Activated CD4-positive, alpha-beta T cell treated with anti-CD3 and anti-CD28 coated beads for 36 hours (primary cell): ENCODE measurements at regions of chr4 and their contacts with region 1.

Region 1: GRCh38 chr4:89906777-89907521 is 12.3 kb downstream of the MMRN1 start:
- DNase-seq: no peak
- ATAC-seq: peak; percentile 93
- H3K4me3 Mint-ChIP-seq: no peak overlapping the region
- H3K27ac Mint-ChIP-seq: no peak overlapping the region
- H3K4me1 Mint-ChIP-seq: peaks cover 2% of the 10 kb centered on the region
- H3K27me3 Mint-ChIP-seq: no peaks in the 10 kb centered on the region

Region 2: GRCh38 chr4:89586864-89587263 is 320.1 kb before region 1 on chr4:
- CTCF ChIA-PET with region 1: no interaction called
- POLR2A ChIA-PET with region 1: no interaction called
- intact Hi-C with region 1: loop called (anchors 5 to 10 kb)
- DNase-seq: no peak
- ATAC-seq: no peak
- H3K4me3 Mint-ChIP-seq: no peak overlapping the region
- H3K27ac Mint-ChIP-seq: no peak overlapping the region
- H3K4me1 Mint-ChIP-seq: no peaks in the 10 kb centered on the region
- H3K27me3 Mint-ChIP-seq: peaks cover 2% of the 10 kb centered on the region

Region 3: GRCh38 chr4:89640620-89641366 is 266.2 kb before region 1 on chr4:
- CTCF ChIA-PET with region 1: interaction called, 3 read pairs
- POLR2A ChIA-PET with region 1: no interaction called
- intact Hi-C with region 1: loop called (anchors 5 kb)
- DNase-seq: peak; percentile 37
- ATAC-seq: no peak
- H3K4me3 Mint-ChIP-seq: no peak overlapping the region
- H3K27ac Mint-ChIP-seq: no peak overlapping the region
- H3K4me1 Mint-ChIP-seq: no peaks in the 10 kb centered on the region
- H3K27me3 Mint-ChIP-seq: peaks cover 4% of the 10 kb centered on the region